Astrocyte of the cerebellum (primary cell): ENCODE measurements at regions of chr7 and their contacts with region 1.

Region 1: DNA sequence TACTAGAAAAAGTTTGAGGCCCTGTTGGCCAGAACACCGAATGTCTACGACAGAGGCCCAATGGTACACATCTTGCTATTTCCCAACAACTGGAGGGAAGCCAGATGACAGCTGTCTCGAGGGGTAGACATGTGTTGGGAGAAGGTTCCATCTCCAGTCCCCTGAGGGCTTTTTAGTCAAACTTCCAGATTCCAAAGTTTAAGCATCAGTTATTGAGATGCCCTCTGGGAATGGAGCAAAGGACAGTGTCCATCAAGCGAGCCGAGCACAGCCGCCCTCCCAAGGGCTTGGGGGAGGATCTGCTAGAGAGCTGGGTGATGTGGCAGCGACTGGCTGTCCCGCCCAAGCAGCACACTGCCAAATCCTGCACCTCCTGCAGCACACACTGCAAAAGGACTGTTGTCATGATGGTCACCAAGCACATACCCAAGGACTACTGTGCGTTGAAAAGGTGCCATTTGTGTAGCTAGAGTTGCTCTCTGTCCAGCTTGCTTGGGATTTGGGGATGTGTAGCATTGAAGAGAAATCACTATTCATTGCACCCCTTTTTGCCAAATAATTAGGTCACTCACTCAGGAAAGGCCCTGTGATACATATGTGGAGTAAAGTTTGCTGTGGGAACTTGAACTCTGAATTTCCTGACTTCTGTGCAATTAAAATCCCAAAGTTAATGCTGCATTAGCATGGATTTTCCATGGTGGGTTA is 164.6 kb downstream of the TRIL start:
- DNase-seq: no peak
- H3K4me3 ChIP-seq: no peak overlapping the region
- CTCF ChIP-seq: no peak

Region 2: DNA sequence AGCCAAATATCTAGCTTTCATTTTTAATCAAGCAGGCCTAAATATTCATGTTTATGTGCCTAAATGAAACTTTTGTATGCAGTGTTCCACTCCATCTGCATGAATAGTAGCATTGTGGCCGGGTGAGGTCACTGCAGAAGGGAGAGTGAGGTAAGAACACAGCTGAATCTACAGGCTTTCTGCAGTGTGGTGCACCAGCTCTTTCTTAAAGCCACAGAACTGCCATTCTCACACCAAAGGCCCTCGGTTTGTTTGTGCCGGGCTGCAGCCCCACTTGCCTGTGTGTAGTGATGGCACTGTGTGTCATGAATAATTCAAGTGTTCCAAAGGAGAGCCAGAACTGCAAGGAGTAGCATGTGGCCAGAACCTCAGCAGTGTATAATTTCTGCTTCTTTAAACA is 39.5 kb before region 1 on chr7:
- in situ Hi-C with region 1: loop called (anchors 5 kb)
- DNase-seq: peak; percentile 51
- H3K4me3 ChIP-seq: no peak overlapping the region
- CTCF ChIP-seq: peak; percentile 28

Region 3: DNA sequence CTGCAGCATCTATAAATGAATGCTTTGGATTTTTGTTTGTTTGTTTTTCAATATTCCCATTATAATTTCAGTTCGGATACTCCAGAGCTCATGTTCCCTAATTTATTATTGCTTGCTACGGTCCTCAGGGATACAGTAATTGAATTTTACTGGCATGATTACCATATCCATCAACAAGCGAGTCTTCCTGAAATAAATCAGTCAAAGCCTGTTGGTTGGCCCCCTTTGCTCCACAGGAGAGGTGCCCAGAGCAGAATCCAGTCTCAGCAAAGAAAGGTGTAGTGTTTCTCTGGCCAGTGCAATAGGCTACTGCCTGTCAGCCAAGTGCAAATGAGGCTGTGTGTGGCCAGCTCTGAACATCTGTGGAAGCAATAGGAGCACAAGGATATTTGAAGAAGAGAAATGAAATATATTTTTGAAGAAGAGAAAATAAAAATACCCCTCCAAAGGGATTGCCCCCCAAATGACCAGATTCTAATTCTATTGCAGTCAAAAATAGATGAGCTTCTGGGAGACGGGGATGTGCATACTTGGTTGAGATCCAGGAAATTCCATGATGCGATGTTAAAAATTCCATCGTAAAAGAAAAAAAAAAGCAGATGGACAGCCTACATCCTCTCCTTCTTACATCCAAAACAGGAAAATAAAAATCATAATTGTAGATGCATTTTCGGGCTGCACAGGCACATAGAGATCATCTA is 146.5 kb after region 1 on chr7:
- in situ Hi-C with region 1: no loop called
- DNase-seq: no peak
- H3K4me3 ChIP-seq: no peak overlapping the region
- CTCF ChIP-seq: no peak